Activated CD8-positive, alpha-beta memory T cell treated with anti-CD3 and anti-CD28 coated beads, Interleukin-2, amount 10 ng/mL, durations not matched to agents 7 days and 5 days (primary cell): ENCODE measurements at regions of chr4 and their contacts with region 1.

Region 1: DNA sequence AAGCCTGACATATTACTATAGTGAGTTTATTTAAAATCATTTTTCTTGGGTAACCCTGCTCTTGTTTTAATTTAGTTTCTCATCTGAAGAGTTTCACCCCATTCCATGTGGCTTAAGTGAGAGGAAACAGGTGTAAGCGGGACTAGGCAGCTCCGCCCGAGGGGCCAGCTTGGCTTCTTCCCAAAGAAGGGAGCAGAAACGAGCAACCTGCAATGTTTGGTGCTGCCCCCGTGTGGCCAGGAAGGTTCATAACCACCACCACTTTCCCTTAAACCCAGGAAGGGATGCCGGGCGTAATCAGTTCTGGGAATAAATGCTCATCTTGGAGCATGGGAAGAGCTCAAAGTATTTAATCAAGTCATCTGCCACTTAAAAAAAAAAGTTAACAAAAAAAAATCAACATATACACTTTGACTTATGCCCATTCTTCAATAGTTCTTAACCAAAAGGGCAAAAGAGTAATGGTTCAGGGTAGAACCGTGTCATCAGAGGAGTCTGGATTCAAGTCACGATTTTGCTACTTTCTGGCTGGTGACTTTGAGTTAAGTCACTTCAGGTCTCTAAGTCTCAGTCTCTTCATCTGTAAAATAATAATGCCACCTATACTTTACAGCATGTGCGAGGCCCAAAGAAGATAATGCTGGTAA is 147.9 kb downstream of the NSUN7 start:
- DNase-seq: peak; percentile 65
- ATAC-seq: peak; percentile 72
- H3K4me3 Mint-ChIP-seq: peak overlapping the region; percentile 24
- H3K27ac Mint-ChIP-seq: no peak overlapping the region
- H3K4me1 Mint-ChIP-seq: peaks cover 4% of the 10 kb centered on the region
- H3K27me3 Mint-ChIP-seq: no peaks in the 10 kb centered on the region

Region 2: DNA sequence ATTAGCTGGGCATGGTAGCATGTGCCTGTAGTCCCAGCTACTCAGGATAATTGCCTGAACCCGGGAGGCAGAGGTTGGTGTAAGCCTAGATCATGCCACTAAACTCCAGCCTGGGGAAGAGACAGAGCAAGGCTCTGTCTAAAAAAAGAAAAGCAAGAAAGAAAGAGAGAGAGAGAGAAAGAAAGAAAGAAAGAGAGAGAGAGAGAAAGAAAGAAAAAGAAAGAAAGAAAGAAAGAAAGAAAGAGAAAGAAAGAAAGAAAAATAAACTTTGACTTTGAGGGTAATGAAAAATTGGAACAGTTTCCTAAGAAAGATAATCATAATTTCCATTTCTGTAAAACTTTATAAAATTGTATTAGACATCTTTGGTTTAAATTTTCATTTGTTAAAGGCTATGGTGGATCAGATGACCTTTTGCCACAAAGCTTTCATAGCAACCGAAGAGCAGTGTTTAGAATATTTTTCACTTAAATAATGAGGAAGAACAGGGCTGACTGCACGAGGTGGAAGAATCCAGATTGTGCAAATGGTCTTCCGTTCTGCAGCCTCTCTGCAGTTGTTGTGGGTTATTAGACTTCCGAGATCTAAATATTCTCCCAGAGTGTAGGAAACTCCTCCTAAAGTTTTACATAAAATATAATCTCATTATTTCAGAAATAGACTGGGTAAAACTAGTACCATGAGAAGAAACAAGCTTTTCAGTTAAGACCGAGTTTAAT is 323.9 kb before region 1 on chr4:
- CTCF ChIA-PET with region 1: no interaction called
- DNase-seq: no peak
- ATAC-seq: no peak
- H3K4me3 Mint-ChIP-seq: no peak overlapping the region
- H3K27ac Mint-ChIP-seq: no peak overlapping the region
- H3K4me1 Mint-ChIP-seq: peaks cover 26% of the 10 kb centered on the region
- H3K27me3 Mint-ChIP-seq: peaks cover 2% of the 10 kb centered on the region

Region 3: GRCh38 chr4:40736910-40737309 is 160.8 kb before region 1 on chr4:
- CTCF ChIA-PET with region 1: interaction called, 16 read pairs
- DNase-seq: no peak
- ATAC-seq: peak; percentile 39
- H3K4me3 Mint-ChIP-seq: no peak overlapping the region
- H3K27ac Mint-ChIP-seq: no peak overlapping the region
- H3K4me1 Mint-ChIP-seq: peaks cover 10% of the 10 kb centered on the region
- H3K27me3 Mint-ChIP-seq: peaks cover 15% of the 10 kb centered on the region

Region 4: DNA sequence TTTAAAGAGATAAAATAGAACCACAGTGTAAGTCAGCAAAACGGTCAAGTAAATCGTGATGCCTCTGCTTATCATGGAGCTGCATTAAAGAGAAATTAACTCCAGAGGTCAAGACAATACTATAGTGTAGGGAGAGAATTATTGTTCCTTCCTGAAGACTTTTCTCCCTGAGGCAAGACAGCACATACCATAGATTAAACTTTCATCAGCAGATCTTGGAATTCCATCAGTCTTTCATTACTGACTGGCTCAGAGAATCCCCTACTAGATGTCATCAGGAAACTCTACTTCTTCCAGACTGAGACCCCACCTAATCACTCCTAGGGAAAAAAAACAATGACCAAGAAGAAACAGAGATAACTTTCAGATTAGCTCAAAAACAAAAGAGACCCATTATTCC is 16.6 kb before region 1 on chr4:
- CTCF ChIA-PET with region 1: interaction called, 13 read pairs
- DNase-seq: no peak
- ATAC-seq: no peak
- H3K4me3 Mint-ChIP-seq: no peak overlapping the region
- H3K27ac Mint-ChIP-seq: no peak overlapping the region
- H3K4me1 Mint-ChIP-seq: no peaks in the 10 kb centered on the region
- H3K27me3 Mint-ChIP-seq: peaks cover 51% of the 10 kb centered on the region

Region 5: GRCh38 chr4:40887288-40888131 is 10.2 kb before region 1 on chr4:
- CTCF ChIA-PET with region 1: interaction called, 13 read pairs
- DNase-seq: no peak
- ATAC-seq: no peak
- H3K4me3 Mint-ChIP-seq: no peak overlapping the region
- H3K27ac Mint-ChIP-seq: no peak overlapping the region
- H3K4me1 Mint-ChIP-seq: peaks cover 7% of the 10 kb centered on the region
- H3K27me3 Mint-ChIP-seq: peaks cover 16% of the 10 kb centered on the region

Region 6: DNA sequence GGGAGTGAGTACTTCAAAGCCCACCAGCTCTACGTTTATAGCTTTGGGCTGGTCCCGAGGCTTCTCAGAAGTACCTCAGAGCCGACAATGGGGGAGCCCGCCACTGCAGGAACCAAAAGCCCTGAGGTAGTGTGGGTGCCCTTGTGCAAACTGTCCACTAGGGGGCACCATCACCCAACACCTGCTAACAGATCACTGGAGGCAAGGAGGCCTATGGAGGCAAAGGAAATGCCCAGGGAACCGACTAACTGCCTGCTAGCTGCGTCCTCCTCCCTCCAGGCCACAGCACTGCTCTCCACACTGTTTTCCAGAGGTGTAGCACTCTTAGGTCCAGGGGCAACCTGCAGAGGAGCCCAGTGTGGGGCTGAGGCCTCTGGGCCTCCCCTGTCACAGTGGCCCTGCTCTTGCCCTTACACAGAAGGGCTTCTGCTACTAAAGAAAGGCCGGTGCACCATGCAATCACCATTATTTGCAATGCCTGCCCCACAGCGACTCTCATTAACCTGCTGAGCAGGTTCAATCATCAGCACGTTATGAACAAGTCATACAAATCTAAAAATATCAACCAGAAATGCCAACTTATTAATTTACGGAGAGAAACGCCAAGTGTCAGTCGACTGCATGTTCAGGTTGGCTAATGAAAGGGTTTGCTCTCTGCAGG is 11.2 kb after region 1 on chr4:
- CTCF ChIA-PET with region 1: interaction called, 26 read pairs
- DNase-seq: peak; percentile 79
- ATAC-seq: peak; percentile 85
- H3K4me3 Mint-ChIP-seq: no peak overlapping the region
- H3K27ac Mint-ChIP-seq: no peak overlapping the region
- H3K4me1 Mint-ChIP-seq: peaks cover 13% of the 10 kb centered on the region
- H3K27me3 Mint-ChIP-seq: no peaks in the 10 kb centered on the region

Region 7: DNA sequence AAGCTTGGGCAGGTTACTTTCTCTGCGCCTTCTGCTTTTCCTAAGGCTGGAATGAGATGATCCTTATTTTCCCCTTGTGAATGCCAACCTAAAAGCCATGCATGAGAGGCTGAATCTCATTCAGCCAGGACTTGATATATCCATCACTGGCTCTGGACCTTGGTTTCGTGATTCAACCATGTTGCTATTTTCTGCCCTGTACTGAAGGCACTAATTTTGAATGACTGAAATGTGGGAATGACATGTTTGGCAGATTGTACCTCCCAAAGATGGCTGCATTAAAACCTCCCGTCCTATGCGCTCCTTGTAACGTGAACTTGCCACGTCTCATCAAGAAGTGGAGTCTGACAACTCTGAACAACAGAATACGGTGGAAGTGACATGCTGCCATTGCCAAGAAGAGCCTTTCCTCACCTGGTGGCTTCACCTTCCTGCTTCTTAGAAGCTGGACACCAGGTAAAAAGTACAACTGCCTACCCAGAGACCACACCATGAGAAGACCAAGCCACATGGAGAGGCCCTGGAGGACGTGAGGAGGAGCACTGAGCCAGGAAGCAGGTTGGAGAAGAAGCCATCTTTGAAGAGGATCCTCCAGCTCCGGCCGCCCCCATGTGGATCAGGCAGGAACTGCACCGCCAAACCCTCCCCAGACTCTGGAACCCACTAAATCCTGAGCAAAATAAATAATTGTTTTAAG is 26.6 kb after region 1 on chr4:
- CTCF ChIA-PET with region 1: interaction called, 11 read pairs
- DNase-seq: peak; percentile 79
- ATAC-seq: peak; percentile 85
- H3K4me3 Mint-ChIP-seq: no peak overlapping the region
- H3K27ac Mint-ChIP-seq: peak overlapping the region; percentile 31
- H3K4me1 Mint-ChIP-seq: peaks cover 6% of the 10 kb centered on the region
- H3K27me3 Mint-ChIP-seq: peaks cover 13% of the 10 kb centered on the region